Gastrocnemius medialis (tissue), 4 donors: ENCODE measurements at regions of chr1 and their contacts with region 1.

Region 1: GRCh38 chr1:153532769-153533599 is 2.8 kb downstream of the S100A6 start:
- DNase-seq: peak; percentile 71 to 84
- ATAC-seq: peak; percentile 54 to 59
- H3K4me3 ChIP-seq: peak overlapping the region; percentile 54 to 70 (median 65)
- H3K27ac ChIP-seq: peak overlapping the region; percentile 82 to 92 (median 86)
- H3K4me1 ChIP-seq: peaks cover 10 to 28% of the 10 kb centered on the region in 2 donors
- H3K27me3 ChIP-seq: no peaks in the 10 kb centered on the region
- CTCF ChIP-seq: peak; percentile 90 to 93 (median 91)
- POLR2A ChIP-seq: no peak

Region 2: DNA sequence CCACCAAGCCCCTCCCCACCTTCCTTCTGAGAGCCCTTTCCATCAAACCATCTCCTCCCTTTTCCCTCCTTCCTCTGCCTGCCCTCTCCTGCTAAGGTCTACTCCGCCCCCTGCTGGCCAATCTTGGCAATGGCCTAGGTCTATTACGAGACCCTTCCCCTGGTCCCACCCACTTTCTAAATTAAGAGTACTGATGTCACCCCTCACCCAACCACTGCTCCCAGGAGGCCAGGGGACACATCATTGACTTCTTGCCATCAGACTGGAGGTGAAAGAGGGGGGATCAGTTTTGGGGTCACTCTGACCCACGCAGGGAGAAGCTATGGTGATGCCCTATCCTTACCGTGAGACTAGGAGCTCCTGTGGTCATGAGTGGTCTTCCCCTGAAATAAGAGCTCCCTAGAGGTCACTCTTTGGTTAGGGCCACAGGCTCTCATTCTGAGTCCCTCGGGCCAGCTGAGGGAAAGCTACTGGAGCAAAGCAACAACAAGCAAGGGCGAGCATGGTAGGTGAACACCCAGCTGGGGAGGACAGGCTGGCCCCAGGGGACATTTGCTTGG is 37.9 kb before region 1 on chr1:
- in situ Hi-C with region 1: no loop called
- intact Hi-C with region 1: no loop called
- DNase-seq: peak; percentile 35 to 67
- ATAC-seq: no peak
- H3K4me3 ChIP-seq: no peak overlapping the region
- H3K27ac ChIP-seq: no peak overlapping the region
- H3K4me1 ChIP-seq: peaks cover 13 to 14% of the 10 kb centered on the region in 2 donors
- H3K27me3 ChIP-seq: no peaks in the 10 kb centered on the region
- CTCF ChIP-seq: peak; percentile 91 to 97 (median 94)
- POLR2A ChIP-seq: no peak

Region 3: DNA sequence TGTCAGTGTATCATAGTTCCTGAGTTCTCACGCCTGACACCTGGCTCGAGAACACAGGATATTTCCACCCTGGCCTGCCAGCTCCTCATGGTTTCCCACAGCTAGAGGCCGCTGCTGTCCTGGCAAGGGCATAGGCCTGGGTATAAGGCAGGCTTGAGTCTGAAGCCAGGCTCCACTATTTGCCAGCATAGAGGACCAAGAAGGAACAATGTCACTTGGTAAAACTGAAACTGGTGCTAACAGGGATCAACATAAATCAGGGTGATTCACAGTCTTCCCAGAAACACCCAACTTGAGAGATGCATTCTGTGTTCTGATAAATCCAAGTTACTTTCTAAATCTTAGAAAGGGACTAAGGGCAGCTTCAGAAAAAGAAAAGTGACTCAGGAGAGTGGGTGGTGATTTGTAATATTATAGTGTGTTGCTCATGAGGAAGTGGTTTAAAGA is 39.6 kb after region 1 on chr1:
- in situ Hi-C with region 1: loop called in 1 of 4 experiments (anchors 5 kb)
- intact Hi-C with region 1: loop called (anchors 1 kb)
- DNase-seq: peak; percentile 80 to 88
- ATAC-seq: peak; percentile 83 to 86
- H3K4me3 ChIP-seq: no peak overlapping the region
- H3K27ac ChIP-seq: peak overlapping the region; percentile 59 to 77 (median 67)
- H3K4me1 ChIP-seq: peaks cover 14 to 27% of the 10 kb centered on the region in 2 donors
- H3K27me3 ChIP-seq: no peaks in the 10 kb centered on the region
- CTCF ChIP-seq: peak; percentile 78 to 90 (median 84)
- POLR2A ChIP-seq: no peak

Region 4: DNA sequence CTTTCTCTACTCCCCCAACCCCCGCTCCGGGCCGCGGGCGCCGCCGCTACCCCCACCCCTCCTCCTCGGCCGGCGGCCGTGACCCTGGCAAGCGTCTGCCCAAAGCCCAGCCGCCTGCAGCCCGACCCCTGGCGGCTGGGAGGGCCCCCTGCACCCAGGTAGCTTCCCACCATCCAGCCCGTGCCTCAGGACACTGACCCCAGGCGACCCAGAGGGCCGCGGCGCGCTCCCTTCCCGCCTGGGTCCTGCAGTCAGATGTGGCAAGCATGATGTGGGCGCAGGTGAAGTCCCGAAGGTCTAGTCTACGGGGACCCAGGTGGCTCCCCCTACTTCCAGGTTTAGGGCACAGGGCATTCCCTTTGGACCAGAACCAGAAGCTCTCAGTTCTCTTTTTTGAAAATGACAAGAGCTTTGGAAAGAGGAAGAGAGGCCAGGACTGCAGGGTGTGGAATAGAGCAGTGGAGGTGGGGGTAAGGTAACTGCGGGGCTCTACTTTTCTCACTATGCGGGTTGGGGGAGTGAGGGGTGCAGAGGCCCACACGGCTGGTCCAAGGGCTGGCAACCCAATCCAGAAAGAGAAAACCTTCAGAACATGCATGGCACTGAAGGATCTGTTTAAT is 413.7 kb after region 1 on chr1 and contains the start of gene DENND4B:
- in situ Hi-C with region 1: no loop called
- intact Hi-C with region 1: no loop called
- DNase-seq: peak; percentile 71 to 86
- ATAC-seq: peak; percentile 74 to 75
- H3K4me3 ChIP-seq: peak within 1 kb of the TSS; percentile 70 to 90 (median 78)
- H3K27ac ChIP-seq: peak within 1 kb of the TSS; percentile 98 to 99 (median 98)
- H3K4me1 ChIP-seq: peaks cover 15 to 31% of the 10 kb centered on the region in 2 donors
- H3K27me3 ChIP-seq: no peaks in the 10 kb centered on the region
- CTCF ChIP-seq: peak; percentile 91 to 99 (median 97)
- POLR2A ChIP-seq: no peak
- total RNA-seq, gene DENND4B: 38.0 to 45.8 (median 40.1) TPM